ENCODE measurements at regions of chr3 and their contacts with region 1.

Region 1: GRCh38 chr3:197354319-197355001 is 56.0 kb upstream of the DLG1 start:
- DNase-seq: no peak
- H3K4me3 ChIP-seq: no peak overlapping the region
- CTCF ChIP-seq: no peak

Region 2: GRCh38 chr3:197406266-197406665 is 51.8 kb after region 1 on chr3:
- in situ Hi-C with region 1: no loop called
- DNase-seq: no peak
- H3K4me3 ChIP-seq: no peak overlapping the region
- CTCF ChIP-seq: no peak

Region 3: GRCh38 chr3:197428117-197428801 is 73.8 kb after region 1 on chr3:
- in situ Hi-C with region 1: loop called (anchors 5 kb)
- DNase-seq: no peak
- H3K4me3 ChIP-seq: no peak overlapping the region
- CTCF ChIP-seq: no peak

Region 4: DNA sequence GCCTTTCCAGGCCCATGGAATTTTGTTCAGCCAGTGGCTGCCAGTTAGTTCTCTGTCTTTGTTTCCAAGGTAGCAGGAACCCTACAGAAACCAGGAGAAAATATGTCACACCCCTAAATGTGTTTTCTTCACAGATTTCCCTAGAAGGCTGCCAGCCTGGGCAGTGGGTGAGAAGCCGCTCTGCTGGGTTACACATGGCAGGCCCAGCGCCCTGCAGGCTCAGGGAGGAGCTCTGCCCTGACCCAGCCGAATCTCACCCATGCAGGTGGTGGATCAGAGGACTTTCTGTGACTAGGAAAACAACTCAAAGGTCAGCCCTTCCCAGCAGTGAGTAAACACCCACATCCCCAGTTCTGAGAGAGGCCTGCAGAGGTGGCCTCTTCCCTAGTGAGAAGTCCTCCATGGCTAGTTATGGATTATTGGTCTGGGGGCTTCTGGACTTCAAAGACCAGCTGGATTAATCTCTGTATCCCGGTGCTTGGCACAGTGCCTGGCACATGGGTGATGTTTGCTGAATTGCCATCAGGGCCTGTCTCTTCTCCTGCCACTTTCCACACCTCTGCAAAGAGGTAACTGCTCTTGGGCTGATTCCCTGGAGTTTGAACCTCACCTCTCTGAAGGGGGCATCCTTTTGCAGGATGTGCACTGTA is 236.0 kb after region 1 on chr3:
- in situ Hi-C with region 1: no loop called
- DNase-seq: no peak
- H3K4me3 ChIP-seq: no peak overlapping the region
- CTCF ChIP-seq: no peak

Region 5: DNA sequence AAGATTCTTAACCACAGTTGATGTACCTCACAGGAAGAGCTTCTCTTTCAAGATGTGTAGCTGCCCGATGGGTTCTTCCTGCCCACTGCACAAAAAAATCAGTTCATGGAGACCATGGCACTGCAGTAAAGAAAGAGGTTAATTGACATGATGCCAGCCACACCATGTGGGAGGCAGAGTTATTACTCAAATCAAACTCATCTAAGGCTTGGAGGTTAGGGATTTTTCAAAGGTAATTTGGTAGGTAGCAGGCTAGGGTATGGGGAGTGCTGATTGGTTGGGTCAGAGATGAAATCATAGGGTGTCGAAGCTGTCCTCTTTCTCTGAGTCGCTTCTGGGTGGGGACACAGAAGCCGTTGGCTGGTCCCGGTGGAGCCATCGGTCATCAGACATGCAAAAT is 258.7 kb after region 1 on chr3:
- in situ Hi-C with region 1: no loop called
- DNase-seq: no peak
- H3K4me3 ChIP-seq: no peak overlapping the region
- CTCF ChIP-seq: no peak

Measured in astrocyte of the cerebellum (primary cell).